GM12878 (cell line): ENCODE measurements at regions of chr17 and their contacts with region 1.

Region 1: GRCh38 chr17:8109661-8110464 is 8.5 kb downstream of the ALOXE3 start:
- DNase-seq: no peak
- ATAC-seq: peak; percentile 99
- H3K4me3 ChIP-seq: peak overlapping the region; percentile 57; the same call in 1 of the 2 replicates
- H3K27ac ChIP-seq: no peak overlapping the region
- H3K4me1 ChIP-seq: peaks cover 4% of the 10 kb centered on the region
- H3K27me3 ChIP-seq: no peaks in the 10 kb centered on the region; a peak in 2 of 4 replicates
- CTCF ChIP-seq: peak; percentile 85 to 97 (median 94)
- EP300 ChIP-seq: no peak
- POLR2A ChIP-seq: no peak
- RAD21 ChIP-seq: peak; percentile 66

Region 2: DNA sequence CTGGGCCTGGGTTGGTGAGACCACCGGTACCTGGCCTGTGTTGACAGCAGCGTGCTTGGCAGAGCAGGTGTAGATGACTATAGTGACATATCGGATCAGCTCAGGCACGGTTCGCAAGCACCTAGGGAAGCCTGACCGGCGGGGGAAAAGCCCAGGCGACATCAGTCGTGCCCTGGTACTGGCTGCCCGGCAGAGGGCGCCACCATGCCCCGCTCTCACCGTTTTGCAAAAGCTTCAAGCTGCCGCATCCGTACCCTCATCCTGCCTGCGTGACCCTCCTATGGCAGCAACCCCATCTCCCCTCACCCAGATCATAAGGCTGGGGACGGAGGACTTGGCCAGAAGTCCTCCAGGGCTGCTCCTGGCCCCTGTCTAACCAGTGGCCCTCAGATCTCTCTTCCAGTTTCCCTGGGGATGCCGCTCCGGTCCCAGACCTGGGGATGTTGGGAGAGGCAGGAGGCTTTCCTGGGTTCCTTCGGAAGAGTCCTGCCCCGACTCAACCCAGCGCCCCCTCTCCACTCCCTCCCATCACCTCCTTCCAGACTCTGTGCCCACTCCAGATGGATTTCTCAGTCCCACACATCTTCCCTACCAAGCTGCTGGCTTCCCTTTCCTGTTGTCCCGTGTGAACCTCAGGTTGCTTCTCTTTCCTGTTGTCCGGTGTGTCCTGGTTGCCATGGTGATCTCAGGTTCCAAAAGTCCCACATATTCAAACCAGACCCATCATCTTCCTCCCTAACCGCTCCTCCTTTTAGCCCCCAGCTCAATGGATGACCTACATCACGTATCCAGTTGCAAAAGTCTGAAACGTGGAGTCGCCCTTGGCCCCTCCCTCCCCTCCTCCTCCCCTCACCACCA is 36.0 kb before region 1 on chr17:
- CTCF ChIA-PET with region 1: interaction called, 116 read pairs
- POLR2A ChIA-PET with region 1: no interaction called
- RAD21 ChIA-PET with region 1: interaction called, 11 read pairs
- SMC1A ChIA-PET with region 1: interaction called, 7 read pairs
- in situ Hi-C with region 1: loop called (anchors 5 kb)
- intact Hi-C with region 1: no loop called
- DNase-seq: no peak
- ATAC-seq: peak; percentile 97
- H3K4me3 ChIP-seq: no peak overlapping the region
- H3K27ac ChIP-seq: no peak overlapping the region
- H3K4me1 ChIP-seq: no peaks in the 10 kb centered on the region
- H3K27me3 ChIP-seq: peaks cover 8 to 20% of the 10 kb centered on the region in 2 experiments
- CTCF ChIP-seq: peak; percentile 86 to 95 (median 93)
- EP300 ChIP-seq: no peak
- POLR2A ChIP-seq: no peak
- RAD21 ChIP-seq: no peak

Region 3: DNA sequence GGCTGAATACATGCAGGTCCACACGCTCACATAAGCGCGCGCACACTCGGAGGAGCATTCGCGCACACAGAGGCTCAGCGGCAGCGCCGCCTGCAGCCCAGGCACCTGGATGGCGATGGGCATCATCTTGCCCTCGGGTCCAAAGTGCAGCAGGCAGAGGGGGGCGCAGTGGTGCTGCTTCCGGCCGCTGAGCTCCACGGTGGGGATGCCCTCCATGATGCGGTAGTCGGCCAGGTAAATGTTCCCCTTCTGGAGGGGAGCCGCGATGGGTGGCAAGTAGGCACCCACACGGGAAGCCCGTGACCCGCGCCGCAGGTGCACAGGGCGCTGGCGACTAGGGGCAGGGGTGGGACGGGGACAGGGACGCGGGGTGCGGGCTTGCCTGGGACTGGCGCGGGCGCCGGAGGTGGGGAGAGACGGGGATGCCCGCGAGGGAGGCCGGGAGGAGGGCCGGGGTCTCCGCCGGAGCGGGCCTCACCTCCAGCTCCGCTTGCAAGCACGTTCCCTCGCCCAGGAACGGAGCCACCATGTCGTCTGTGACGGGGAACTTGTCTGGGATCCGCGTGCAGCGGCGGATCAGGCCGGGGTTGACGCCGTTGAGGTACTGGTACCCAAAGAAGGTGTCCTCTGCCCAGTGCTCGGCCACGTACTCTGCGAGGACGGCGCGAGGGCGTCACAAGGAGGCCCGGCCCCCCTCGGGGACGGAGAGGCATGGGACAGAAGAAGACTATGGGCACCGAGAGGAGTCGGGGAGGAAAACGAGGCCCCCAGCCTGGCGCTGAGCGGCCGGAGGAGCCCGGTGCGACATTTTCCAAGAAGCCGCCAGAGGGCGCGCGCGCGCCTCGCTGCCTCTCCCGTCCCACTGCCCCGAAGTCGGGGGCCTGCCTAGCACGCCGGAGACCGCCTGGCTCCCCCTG is 30.3 kb before region 1 on chr17:
- CTCF ChIA-PET with region 1: interaction called, 116 read pairs
- POLR2A ChIA-PET with region 1: interaction called, 4 read pairs
- RAD21 ChIA-PET with region 1: interaction called, 11 read pairs
- SMC1A ChIA-PET with region 1: interaction called, 7 read pairs
- in situ Hi-C with region 1: loop called (anchors 5 kb)
- intact Hi-C with region 1: no loop called
- DNase-seq: no peak
- ATAC-seq: peak; percentile 96
- H3K4me3 ChIP-seq: peak overlapping the region; percentile 75
- H3K27ac ChIP-seq: no peak overlapping the region
- H3K4me1 ChIP-seq: peaks cover 4% of the 10 kb centered on the region; the same call in 1 of the 2 replicates
- H3K27me3 ChIP-seq: peaks cover 3% of the 10 kb centered on the region in 2 experiments; a peak in 3 of 4 replicates
- CTCF ChIP-seq: peak; percentile 78 to 91 (median 90)
- EP300 ChIP-seq: no peak
- POLR2A ChIP-seq: no peak; the same call in 1 of the 2 replicates
- RAD21 ChIP-seq: peak; percentile 57

Region 4: DNA sequence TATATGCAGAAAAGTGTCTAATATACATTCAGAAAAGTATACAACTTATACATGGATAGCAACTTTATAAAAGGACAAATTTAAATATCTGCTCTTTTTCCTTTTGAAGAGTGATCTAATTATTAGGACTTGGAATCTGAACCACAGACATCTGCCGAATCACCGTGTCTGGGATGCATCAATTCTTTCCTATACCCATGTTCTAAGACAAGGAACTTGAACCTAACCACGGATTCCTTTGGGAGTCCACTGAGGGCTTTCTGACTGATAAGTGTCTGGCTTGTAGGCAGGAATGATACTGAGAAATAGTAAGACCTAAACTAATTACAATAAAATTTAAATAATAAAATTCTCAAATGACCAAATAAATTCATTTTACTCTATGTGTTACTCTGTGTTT is 380.0 kb after region 1 on chr17:
- CTCF ChIA-PET with region 1: no interaction called
- POLR2A ChIA-PET with region 1: no interaction called
- RAD21 ChIA-PET with region 1: no interaction called
- SMC1A ChIA-PET with region 1: no interaction called
- in situ Hi-C with region 1: no loop called
- intact Hi-C with region 1: no loop called
- DNase-seq: no peak
- ATAC-seq: no peak
- H3K4me3 ChIP-seq: no peak overlapping the region
- H3K27ac ChIP-seq: no peak overlapping the region
- H3K4me1 ChIP-seq: no peaks in the 10 kb centered on the region
- H3K27me3 ChIP-seq: no peaks in the 10 kb centered on the region
- CTCF ChIP-seq: no peak
- EP300 ChIP-seq: no peak
- POLR2A ChIP-seq: no peak
- RAD21 ChIP-seq: no peak